A673 (cell line): ENCODE measurements at regions of chr10 and their contacts with region 1.

Region 1: GRCh38 chr10:106500559-106501525 is 663.7 kb downstream of the SORCS1 start:
- DNase-seq: no peak
- H3K4me3 ChIP-seq: no peak overlapping the region
- H3K27ac ChIP-seq: peak overlapping the region; percentile 8
- H3K4me1 ChIP-seq: peaks cover 68% of the 10 kb centered on the region
- H3K27me3 ChIP-seq: no peaks in the 10 kb centered on the region
- CTCF ChIP-seq: no peak

Region 2: DNA sequence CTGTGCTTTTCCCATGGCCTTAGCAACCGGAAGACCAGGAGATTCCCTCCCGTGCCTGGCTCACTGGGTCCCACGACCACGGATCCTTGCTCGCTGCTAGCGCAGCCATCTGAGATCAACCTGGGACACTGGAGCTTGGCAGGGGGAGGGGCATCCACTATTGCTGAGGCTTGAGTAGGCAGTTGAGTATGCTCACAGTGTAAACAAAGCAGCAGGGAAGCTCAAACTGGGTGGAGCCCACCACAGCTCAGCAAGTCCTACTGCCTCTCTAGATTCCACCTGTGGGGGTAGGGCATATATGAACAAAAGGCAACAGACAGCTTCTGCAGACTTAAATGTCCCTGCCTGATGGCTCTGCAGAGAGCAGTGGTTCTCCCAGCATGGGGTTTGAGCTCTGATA is 33.3 kb before region 1 on chr10:
- CTCF ChIA-PET with region 1: no interaction called
- POLR2A ChIA-PET with region 1: interaction called, 28 read pairs
- intact Hi-C with region 1: no loop called
- DNase-seq: no peak
- H3K4me3 ChIP-seq: no peak overlapping the region
- H3K27ac ChIP-seq: no peak overlapping the region
- H3K4me1 ChIP-seq: no peaks in the 10 kb centered on the region
- H3K27me3 ChIP-seq: no peaks in the 10 kb centered on the region
- CTCF ChIP-seq: no peak

Region 3: DNA sequence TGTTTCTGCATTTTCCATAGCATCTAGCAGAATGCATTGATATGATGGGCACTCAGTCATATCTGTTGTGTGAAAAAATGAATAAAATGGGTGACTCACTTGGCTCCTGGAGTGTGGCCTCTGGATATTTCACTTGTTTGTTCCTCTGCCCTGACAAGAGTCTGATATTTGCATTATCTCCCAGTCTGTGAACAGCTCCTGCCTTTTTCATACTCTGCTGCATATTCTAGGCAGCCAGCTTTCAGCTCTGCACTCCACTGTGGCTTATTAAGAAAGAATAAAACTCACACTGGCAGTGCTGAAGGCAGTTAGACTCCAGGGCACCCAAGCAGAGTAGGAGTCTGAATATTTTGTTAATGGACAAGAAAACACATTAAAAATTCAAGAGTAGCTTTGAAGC is 39.8 kb after region 1 on chr10:
- CTCF ChIA-PET with region 1: no interaction called
- POLR2A ChIA-PET with region 1: no interaction called
- intact Hi-C with region 1: no loop called
- DNase-seq: peak; percentile 77
- H3K4me3 ChIP-seq: no peak overlapping the region
- H3K27ac ChIP-seq: peak overlapping the region; percentile 35
- H3K4me1 ChIP-seq: peaks cover 62% of the 10 kb centered on the region
- H3K27me3 ChIP-seq: no peaks in the 10 kb centered on the region
- CTCF ChIP-seq: no peak

Region 4: DNA sequence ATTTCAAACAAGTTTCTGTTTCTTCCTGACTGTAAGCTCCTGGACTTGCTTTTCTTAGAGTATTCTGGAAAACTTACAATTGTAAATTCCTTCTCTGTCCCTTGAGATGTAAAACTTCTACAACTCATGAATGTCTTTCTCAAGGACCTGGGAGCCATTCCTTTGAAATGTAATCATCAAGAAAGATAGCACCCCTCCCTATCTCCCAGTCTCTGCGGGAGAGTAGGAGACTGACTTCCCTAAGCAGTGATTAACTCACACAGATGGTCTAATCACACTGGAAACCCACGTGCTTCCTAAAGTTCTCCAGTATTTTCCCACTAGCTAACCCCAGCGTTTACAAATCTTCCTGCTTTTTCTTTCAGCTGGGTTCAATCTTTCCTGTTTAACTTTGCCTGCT is 114.2 kb after region 1 on chr10:
- CTCF ChIA-PET with region 1: no interaction called
- POLR2A ChIA-PET with region 1: no interaction called
- intact Hi-C with region 1: no loop called
- DNase-seq: no peak
- H3K4me3 ChIP-seq: no peak overlapping the region
- H3K27ac ChIP-seq: no peak overlapping the region
- H3K4me1 ChIP-seq: peaks cover 17% of the 10 kb centered on the region
- H3K27me3 ChIP-seq: no peaks in the 10 kb centered on the region
- CTCF ChIP-seq: no peak